Caco-2 (cell line): ENCODE measurements at regions of chr17 and their contacts with region 1.

Region 1: GRCh38 chr17:63549946-63550807 is at the start of gene DCAF7:
- DNase-seq: peak; percentile 99 to 100
- H3K4me3 ChIP-seq: peak within 1 kb of the TSS; percentile 88
- H3K4me3 Mint-ChIP-seq: peak within 1 kb of the TSS; percentile 98
- H3K27ac Mint-ChIP-seq: peak within 1 kb of the TSS; percentile 96
- H3K4me1 ChIP-seq: no peaks in the 10 kb centered on the region
- H3K4me1 Mint-ChIP-seq: peaks cover 4% of the 10 kb centered on the region
- H3K27me3 ChIP-seq: no peaks in the 10 kb centered on the region
- H3K27me3 Mint-ChIP-seq: no peaks in the 10 kb centered on the region
- CTCF ChIP-seq: no peak
- total RNA-seq, gene DCAF7: 91.2 and 94.5 TPM in 2 replicates

Region 2: DNA sequence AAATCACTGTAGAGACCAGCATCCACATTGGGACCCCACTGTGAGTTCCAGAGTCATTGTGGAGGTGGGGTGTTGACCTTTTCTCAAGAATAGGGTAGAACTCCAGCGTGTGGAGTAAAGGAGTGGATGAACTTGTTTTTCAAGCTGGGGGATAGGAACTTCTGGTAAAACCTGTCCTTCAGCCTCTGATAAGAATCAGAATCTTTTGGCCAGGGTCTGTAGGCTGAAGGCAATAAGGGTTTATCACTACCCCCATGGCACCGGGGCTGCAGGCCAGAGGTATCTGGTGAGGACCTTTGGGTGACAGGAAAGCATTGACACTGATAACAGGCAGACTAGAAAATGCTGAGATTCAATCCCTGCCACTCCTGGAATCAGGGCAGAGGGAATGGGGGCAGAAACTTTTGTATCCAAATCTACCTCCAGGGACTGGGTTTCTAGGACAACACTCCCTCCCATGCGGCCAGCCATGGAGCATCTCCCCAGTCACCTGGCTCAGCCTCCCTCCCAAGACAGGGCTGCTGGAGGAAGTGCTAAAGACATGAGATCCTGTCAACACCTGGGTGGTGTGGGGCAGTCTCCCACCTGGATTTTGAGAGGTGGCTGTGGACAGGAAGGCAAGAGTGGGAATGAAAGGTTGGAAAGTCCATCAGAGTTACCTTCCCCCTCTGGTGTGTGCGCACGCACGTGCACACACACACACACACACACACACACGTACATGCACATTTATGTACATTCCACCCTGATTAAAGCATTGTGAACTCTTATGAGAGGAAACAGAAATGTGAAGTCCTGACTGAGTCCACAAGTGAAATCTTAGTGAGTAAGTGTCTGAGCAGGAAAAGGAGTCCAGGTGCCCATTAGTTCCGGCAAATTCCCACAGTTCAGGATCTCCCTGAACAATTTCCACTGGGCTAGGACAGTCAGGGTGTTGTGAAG is 689.0 kb before region 1 on chr17:
- CTCF ChIA-PET with region 1: no interaction called
- POLR2A ChIA-PET with region 1: no interaction called
- intact Hi-C with region 1: no loop called
- DNase-seq: peak; percentile 6 to 40
- H3K4me3 ChIP-seq: no peak overlapping the region
- H3K4me3 Mint-ChIP-seq: no peak overlapping the region
- H3K27ac Mint-ChIP-seq: no peak overlapping the region
- H3K4me1 ChIP-seq: peaks cover 11% of the 10 kb centered on the region
- H3K4me1 Mint-ChIP-seq: no peaks in the 10 kb centered on the region
- H3K27me3 ChIP-seq: no peaks in the 10 kb centered on the region
- H3K27me3 Mint-ChIP-seq: peaks cover 13% of the 10 kb centered on the region
- CTCF ChIP-seq: no peak

Region 3: DNA sequence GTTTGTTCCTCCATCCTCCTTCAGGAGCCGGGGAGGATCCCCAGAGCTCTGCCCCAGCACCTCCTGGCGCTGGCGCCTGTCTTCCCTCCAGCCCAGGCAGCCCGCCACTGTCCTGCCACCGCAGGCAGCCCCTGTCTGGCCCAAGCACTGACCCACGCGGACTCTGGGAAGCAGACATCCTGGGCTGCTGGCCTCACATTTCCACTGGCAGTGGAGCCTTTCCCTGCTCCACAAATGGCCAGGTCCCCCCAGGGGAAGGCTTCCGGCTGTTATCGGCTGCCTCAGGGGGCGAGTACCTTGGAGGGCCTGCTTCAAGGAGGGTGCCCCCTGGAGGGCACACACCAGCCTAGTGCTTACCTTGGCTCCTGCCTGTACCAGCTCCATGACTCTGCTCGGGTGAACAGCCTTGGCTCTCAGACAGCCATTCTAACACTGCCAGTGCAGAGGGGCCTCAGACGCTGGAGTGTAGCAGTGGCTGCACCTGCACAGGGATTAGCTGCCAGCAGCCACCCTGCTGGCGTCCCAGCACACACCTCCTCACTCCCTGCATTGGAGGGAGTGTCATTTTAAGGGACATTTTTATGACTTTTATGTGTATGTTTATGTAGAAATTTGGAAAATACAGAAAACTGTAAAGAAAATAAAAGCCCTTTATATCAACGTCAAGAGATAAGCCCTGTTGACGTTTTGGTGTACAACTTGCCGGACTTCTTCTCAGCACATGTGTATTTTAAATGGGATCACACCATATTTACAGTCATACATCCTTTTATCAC is 52.3 kb before region 1 on chr17:
- CTCF ChIA-PET with region 1: no interaction called
- POLR2A ChIA-PET with region 1: no interaction called
- intact Hi-C with region 1: no loop called
- DNase-seq: peak in 1 of 2 experiments; percentile 37
- H3K4me3 ChIP-seq: no peak overlapping the region
- H3K4me3 Mint-ChIP-seq: no peak overlapping the region
- H3K27ac Mint-ChIP-seq: no peak overlapping the region
- H3K4me1 ChIP-seq: 0 out of 2 replicates have a peak, but pooled peaks cover 7% of the 10 kb centered on the region
- H3K4me1 Mint-ChIP-seq: no peaks in the 10 kb centered on the region
- H3K27me3 ChIP-seq: no peaks in the 10 kb centered on the region
- H3K27me3 Mint-ChIP-seq: peaks cover 18% of the 10 kb centered on the region
- CTCF ChIP-seq: peak; percentile 15 to 37

Region 4: DNA sequence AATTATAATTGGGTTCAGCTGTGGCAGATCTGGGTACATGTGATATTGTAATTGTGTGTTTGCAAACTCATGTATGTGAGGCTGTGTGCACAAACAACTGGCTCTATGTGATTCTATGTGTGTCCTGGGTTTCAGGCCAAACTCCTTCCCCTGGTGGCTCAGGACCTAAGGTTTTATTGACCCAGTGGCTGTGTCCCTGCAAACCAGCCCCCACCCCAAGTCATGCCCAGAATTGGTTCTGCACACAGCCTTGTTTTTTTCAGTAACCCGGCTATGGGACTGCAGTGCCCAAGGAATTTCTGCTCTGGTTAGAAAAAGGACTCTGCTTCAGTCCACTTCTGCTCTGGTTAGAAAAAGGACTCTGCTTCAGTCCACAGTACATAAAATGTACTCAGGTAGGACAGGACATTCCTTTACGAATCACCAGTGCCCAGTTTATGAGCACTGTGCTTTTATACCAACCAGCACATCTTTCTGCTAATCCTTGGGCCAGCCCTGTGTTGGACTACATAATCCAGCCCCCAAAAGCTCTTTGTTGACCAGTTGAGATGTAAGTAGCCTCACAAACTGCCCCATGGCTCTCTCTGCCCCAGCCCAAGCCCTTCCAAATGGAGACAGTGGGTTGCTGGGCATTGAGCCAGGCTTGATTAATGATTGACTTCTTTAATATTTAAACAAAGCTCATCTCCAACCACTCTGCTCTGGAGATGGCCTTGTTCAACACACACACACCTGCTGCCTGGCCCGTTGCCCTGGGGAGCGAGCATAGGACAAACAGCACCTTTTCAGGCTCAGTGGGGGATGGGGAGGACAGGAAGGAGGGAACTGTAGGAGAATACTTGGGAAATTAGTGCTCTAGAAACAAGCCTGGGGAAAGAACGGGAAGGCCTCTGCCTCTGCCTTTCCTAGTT is 29.9 kb before region 1 on chr17:
- CTCF ChIA-PET with region 1: no interaction called
- POLR2A ChIA-PET with region 1: no interaction called
- intact Hi-C with region 1: no loop called
- DNase-seq: no peak
- H3K4me3 ChIP-seq: no peak overlapping the region
- H3K4me3 Mint-ChIP-seq: no peak overlapping the region
- H3K27ac Mint-ChIP-seq: no peak overlapping the region
- H3K4me1 ChIP-seq: 0 out of 2 replicates have a peak, but pooled peaks cover 4% of the 10 kb centered on the region
- H3K4me1 Mint-ChIP-seq: peaks cover 8% of the 10 kb centered on the region
- H3K27me3 ChIP-seq: no peaks in the 10 kb centered on the region
- H3K27me3 Mint-ChIP-seq: peaks cover 8% of the 10 kb centered on the region
- CTCF ChIP-seq: no peak

Region 5: GRCh38 chr17:63578769-63579259 is 28.6 kb after region 1 on chr17:
- CTCF ChIA-PET with region 1: no interaction called
- POLR2A ChIA-PET with region 1: no interaction called
- intact Hi-C with region 1: loop called (anchors 1 kb)
- DNase-seq: no peak
- H3K4me3 ChIP-seq: no peak overlapping the region
- H3K4me3 Mint-ChIP-seq: no peak overlapping the region
- H3K27ac Mint-ChIP-seq: peak overlapping the region; percentile 83
- H3K4me1 ChIP-seq: peaks cover 6% of the 10 kb centered on the region; the same call in 1 of the 2 replicates
- H3K4me1 Mint-ChIP-seq: peaks cover 10% of the 10 kb centered on the region
- H3K27me3 ChIP-seq: no peaks in the 10 kb centered on the region
- H3K27me3 Mint-ChIP-seq: no peaks in the 10 kb centered on the region
- CTCF ChIP-seq: no peak